Mammary epithelial cell (primary cell): ENCODE measurements at regions of chr2 and their contacts with region 1.

Region 1: DNA sequence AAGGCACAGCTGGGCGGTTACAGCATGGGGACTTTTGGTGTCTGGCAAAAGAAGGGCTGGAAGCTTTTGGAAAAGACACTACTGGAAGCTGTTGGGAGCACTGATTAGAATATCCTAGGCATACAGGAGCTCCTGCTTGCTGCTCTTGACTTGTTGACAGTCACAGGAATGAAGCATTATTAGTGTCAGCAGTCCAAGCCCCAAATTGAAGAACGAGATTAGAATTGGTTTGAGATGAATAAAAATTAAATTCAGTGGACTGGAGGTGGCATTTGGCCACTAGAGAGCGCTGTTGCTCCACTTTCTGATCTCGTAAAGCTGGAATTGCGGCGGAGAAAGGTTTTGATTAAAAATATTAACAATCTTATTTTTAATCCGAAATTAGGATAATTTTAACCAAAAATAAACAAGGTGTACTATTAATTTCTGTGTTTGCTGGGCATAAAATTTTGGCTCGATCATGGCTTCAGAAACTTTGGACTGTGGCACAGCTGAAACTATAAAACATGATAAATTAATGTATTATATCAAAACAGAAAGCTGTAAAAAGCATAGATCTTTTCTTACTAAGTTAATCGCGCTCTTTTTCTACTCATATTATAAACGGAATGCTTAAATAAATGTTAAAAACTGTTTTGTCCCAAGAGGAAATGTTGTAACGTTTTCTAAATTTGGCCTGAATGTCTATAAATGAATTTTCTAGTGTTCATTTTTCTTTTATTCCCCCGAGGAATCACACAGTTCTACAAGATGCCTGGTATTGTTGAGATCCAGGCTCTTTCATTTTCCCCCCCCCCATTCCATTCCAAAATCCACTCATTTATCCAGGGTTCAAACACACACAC is 2.4 kb upstream of the HOXD8 start:
- DNase-seq: no peak
- H3K4me3 ChIP-seq: no peak overlapping the region
- H3K27ac ChIP-seq: no peak overlapping the region
- H3K4me1 ChIP-seq: peaks cover 8% of the 10 kb centered on the region
- H3K27me3 ChIP-seq: peaks cover 88% of the 10 kb centered on the region
- CTCF ChIP-seq: peak; percentile 74

Region 2: GRCh38 chr2:176814306-176815052 is 687.3 kb after region 1 on chr2:
- CTCF ChIA-PET with region 1: interaction called, 5 read pairs
- dilution Hi-C with region 1: no loop called
- in situ Hi-C with region 1: loop called (anchors 25 kb)
- intact Hi-C with region 1: loop called (anchors 2 kb)
- DNase-seq: no peak
- H3K4me3 ChIP-seq: no peak overlapping the region
- H3K27ac ChIP-seq: no peak overlapping the region
- H3K4me1 ChIP-seq: no peaks in the 10 kb centered on the region
- H3K27me3 ChIP-seq: peaks cover 2% of the 10 kb centered on the region
- CTCF ChIP-seq: peak; percentile 39 to 53

Region 3: DNA sequence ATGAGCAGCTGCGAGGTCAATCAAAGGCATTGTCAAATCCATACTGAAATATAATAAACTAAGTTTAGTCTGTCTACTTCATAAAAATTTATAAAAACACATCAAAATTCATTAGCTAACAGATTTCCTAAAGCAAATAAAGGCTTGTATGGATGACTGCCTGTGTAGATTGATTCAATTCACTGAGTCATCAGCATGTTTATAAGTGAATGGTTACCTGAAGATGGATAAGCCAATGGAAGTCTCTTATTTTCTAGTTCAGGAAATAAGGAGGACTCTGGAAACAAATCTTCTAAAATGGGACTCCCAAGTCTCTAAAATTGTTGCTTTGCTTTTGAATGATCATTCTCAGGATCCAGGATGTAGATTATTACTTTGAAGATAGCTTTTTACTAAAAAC is 1028.5 kb after region 1 on chr2:
- CTCF ChIA-PET with region 1: no interaction called
- dilution Hi-C with region 1: no loop called
- in situ Hi-C with region 1: loop called in 1 of 2 experiments (anchors 10 kb)
- intact Hi-C with region 1: no loop called
- DNase-seq: no peak
- H3K4me3 ChIP-seq: no peak overlapping the region
- H3K27ac ChIP-seq: no peak overlapping the region
- H3K4me1 ChIP-seq: no peaks in the 10 kb centered on the region
- H3K27me3 ChIP-seq: no peaks in the 10 kb centered on the region
- CTCF ChIP-seq: no peak